ENCODE measurements at regions of chr19 and their contacts with region 1.

Region 1: GRCh38 chr19:40139533-40140287 is 49.0 kb upstream of the ZNF780A start:
- DNase-seq: no peak
- H3K4me3 Mint-ChIP-seq: peak overlapping the region; percentile 28
- H3K27ac Mint-ChIP-seq: peak overlapping the region; percentile 38
- H3K4me1 Mint-ChIP-seq: peaks cover 13% of the 10 kb centered on the region
- H3K27me3 Mint-ChIP-seq: peaks cover 3% of the 10 kb centered on the region

Region 2: GRCh38 chr19:40155749-40156265 is 16.1 kb after region 1 on chr19:
- CTCF ChIA-PET with region 1: interaction called, 12 read pairs
- POLR2A ChIA-PET with region 1: interaction called, 3 read pairs
- intact Hi-C with region 1: no loop called
- DNase-seq: peak; percentile 27
- H3K4me3 Mint-ChIP-seq: no peak overlapping the region
- H3K27ac Mint-ChIP-seq: no peak overlapping the region
- H3K4me1 Mint-ChIP-seq: peaks cover 4% of the 10 kb centered on the region
- H3K27me3 Mint-ChIP-seq: no peaks in the 10 kb centered on the region

Region 3: GRCh38 chr19:40165362-40165937 is 25.7 kb after region 1 on chr19:
- CTCF ChIA-PET with region 1: interaction called, 30 read pairs
- POLR2A ChIA-PET with region 1: no interaction called
- intact Hi-C with region 1: loop called (anchors 2 kb)
- DNase-seq: peak; percentile 78
- H3K4me3 Mint-ChIP-seq: no peak overlapping the region
- H3K27ac Mint-ChIP-seq: no peak overlapping the region
- H3K4me1 Mint-ChIP-seq: peaks cover 8% of the 10 kb centered on the region
- H3K27me3 Mint-ChIP-seq: no peaks in the 10 kb centered on the region

Region 4: DNA sequence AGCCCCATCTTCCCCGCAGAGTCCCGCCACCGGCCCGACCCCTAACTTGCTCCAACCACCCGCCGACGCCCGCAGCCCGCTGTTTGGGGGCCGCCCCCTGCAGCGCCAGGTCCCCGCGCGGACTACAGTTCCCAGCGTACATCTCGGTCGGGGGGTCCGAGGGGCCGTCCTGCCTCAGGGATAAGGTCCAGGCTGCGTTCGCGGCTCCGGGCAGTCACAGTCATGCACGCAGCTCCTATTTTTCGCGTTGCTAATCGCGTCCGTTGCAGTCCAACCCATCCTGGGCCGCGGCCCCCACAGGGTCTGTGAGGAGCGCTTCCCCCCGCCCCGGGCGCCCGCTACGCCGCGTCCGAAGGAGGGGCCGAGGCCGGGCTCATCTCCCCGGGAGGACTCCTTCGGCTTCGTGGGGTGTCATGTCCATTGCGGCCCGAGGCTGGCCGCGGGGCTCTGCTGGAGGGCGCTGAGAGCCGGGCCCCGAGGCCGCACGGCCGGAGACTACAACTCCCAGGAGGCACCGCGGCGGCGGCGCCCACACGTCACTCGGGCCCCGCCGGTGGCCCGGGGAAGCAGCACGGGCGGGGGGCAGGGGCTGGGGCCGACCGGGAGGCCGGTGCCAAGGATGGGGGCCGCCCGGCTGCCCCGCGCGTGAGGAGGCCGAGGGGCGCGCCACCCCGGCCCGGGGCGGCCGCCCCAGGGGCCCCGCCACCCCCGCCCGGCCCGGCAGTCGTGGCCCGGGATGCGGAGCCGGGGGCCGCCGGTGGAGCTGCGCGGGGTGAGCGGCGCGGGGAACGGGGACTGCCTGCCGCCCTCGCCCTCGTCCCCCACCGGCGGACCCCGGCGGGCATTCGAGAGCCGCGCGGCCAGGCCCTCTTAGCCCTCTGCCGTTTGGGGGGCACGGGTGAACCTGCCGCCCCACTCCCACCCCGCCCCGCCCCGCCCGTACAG is 51.5 kb after region 1 on chr19 and contains the start of gene MAP3K10:
- CTCF ChIA-PET with region 1: interaction called, 21 read pairs
- POLR2A ChIA-PET with region 1: interaction called, 4 read pairs
- intact Hi-C with region 1: no loop called
- DNase-seq: peak; percentile 83
- H3K4me3 Mint-ChIP-seq: peak within 1 kb of the TSS; percentile 84
- H3K27ac Mint-ChIP-seq: peak within 1 kb of the TSS; percentile 89
- H3K4me1 Mint-ChIP-seq: peaks cover 20% of the 10 kb centered on the region
- H3K27me3 Mint-ChIP-seq: no peaks in the 10 kb centered on the region
- total RNA-seq, gene MAP3K10: 10.9 to 11.0 TPM

Region 5: DNA sequence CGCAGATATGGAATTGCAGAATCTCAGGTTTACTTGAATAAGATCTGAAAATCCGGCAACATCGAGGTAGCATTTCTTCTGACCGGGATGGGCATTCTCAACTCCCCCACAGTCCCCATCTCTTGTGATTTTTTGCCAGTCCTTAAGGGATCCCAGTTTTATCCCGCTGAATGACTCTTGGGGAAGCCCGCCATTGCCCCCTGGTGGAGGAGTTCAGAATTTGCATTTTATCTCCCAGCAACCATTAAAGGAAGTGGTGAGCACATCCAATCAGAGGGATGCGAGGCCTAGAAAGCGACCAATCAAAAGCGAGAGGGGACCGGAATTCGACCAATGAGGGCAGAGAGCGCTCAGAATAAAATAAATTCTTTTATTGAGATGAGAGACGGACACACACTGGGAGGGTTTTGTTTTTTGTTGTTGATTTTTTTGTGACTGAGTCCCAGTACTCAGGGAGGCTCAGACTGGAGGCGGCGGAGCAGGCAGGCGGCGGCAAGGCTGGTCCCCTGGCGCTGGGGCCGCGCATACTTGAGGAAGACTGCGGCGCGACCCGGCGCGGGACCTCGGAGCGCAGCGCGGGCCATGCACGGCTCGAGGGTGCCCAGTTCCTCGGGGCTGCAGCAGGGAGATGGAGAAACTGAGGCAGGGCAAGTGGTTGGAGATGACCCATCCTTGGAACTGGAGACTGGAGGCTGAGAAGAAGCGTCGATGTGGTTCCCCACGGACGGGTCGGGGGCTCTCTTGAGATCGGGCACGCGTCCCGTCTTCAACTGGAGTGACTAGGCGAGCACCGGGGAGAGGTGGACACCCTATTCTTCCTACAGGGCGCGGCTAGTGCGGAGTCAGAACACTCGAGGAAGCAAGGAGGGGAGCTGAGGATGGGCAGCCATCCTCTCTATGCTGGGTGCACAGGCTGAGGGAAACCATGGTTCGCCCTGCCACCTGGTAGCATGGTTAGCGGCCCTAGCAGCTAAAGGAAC is 82.4 kb after region 1 on chr19:
- CTCF ChIA-PET with region 1: interaction called, 47 read pairs
- POLR2A ChIA-PET with region 1: interaction called, 3 read pairs
- intact Hi-C with region 1: loop called (anchors 1 kb)
- DNase-seq: peak; percentile 82
- H3K4me3 Mint-ChIP-seq: peak overlapping the region; percentile 3
- H3K27ac Mint-ChIP-seq: no peak overlapping the region
- H3K4me1 Mint-ChIP-seq: peaks cover 11% of the 10 kb centered on the region
- H3K27me3 Mint-ChIP-seq: peaks cover 50% of the 10 kb centered on the region

Region 6: GRCh38 chr19:40285353-40286234 is 145.9 kb after region 1 on chr19:
- CTCF ChIA-PET with region 1: interaction called, 4 read pairs
- POLR2A ChIA-PET with region 1: no interaction called
- intact Hi-C with region 1: loop called (anchors 10 kb)
- DNase-seq: peak; percentile 99
- H3K4me3 Mint-ChIP-seq: peak overlapping the region; percentile 87
- H3K27ac Mint-ChIP-seq: peak overlapping the region; percentile 99
- H3K4me1 Mint-ChIP-seq: peaks cover 43% of the 10 kb centered on the region
- H3K27me3 Mint-ChIP-seq: no peaks in the 10 kb centered on the region